CD4-positive, alpha-beta memory T cell (primary cell): ENCODE measurements at regions of chr4 and their contacts with region 1.

Region 1: DNA sequence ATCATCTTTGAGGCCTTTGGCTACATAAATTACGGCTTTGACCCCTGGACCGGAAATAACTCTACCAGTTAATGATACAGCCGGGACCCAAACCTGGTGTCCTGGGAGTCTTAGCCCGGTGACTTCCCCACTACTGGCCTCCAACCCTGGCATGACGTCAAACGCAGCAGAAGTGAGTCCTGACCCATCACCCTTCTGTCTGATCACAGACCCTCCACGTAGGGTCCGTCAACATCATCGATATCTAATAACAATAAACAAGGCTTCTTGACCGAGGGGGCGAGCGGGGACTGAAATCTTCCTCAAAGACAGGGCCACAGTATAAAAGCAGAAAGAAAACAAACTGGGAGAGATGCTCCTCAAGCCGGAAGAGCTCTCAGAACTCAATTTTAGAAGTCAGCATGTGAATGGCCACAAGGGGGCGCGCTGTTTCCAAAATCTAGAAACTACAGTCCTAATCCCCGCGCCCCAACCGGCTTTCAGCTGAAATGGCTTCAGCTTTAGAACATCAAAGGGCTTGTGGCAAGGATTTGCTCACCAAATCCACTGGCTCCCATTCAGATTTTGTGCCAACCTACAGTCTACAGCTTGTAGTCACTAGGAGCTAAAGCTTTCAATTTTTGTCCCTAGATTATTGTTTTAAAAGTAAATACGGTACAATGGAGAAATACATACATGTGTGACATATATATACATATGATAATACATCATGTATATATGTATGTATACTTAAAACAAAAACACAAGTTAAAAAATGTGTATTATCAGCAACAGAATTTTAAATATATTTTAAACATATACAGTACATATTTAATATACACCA is 46.4 kb upstream of the ENPP6 start:
- DNase-seq: peak; percentile 85 to 92 (median 88)
- H3K4me3 ChIP-seq: no peak overlapping the region
- H3K4me3 Mint-ChIP-seq: peak overlapping the region in 5 of 8 donors; percentile 0 to 55 (median 38)
- H3K27ac ChIP-seq: no peak overlapping the region
- H3K27ac Mint-ChIP-seq: peak overlapping the region; percentile 3 to 75 (median 31)
- H3K4me1 ChIP-seq: peaks cover 28% of the 10 kb centered on the region
- H3K4me1 Mint-ChIP-seq: peaks cover 24 to 41% (median 35%) of the 10 kb centered on the region in 4 donors
- H3K27me3 ChIP-seq: no peaks in the 10 kb centered on the region
- H3K27me3 Mint-ChIP-seq: peaks cover 0 to 2% of the 10 kb centered on the region in 2 donors

Region 2: DNA sequence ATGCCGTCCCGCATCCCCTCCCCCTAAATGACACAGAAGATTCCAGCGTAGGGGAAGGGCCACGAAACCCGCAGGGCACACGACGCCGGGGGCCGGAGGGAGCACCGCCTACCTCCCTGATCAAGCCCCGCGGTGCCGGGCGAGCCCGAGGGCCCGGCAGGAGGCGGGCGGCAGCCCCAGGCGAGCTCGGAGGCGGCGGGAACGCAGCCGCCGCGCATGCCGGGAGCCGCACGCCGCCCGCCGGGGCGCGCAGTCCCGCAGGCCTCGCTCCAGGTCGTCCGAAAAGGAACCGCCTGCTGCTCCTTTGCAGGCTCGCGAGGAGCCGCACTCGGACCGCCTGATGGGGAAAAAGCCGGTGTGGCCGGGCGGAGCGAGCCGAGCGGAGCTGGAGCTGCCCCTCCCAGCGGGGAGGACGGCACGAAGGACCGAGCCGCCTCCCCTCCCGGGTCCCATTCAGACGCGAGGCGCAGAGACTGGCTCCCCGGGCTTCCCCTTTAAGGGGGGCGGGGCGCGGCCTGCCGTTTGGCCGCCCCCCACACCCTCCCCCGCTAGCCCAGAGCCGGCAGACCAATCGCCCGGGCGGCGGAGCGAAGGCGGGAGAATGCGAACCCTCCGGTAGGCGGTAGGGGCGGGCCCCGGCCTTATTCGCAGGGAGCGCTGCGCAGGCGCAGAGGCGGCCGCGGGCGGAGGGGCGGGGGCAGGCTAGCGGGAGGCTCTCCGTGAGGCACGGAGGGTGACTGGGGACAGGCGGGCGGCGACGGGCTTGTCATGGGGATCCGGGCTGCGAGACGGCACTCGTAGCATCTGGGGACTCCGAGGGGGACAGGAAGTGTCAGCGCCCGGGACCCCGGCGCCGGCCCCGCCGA is 759.8 kb before region 1 on chr4:
- CTCF ChIA-PET with region 1: no interaction called
- POLR2A ChIA-PET with region 1: no interaction called
- intact Hi-C with region 1: loop called (anchors 5 kb)
- DNase-seq: peak; percentile 98 to 100 (median 99)
- H3K4me3 ChIP-seq: peak overlapping the region; percentile 50 to 73
- H3K4me3 Mint-ChIP-seq: peak overlapping the region; percentile 82 to 98 (median 94)
- H3K27ac ChIP-seq: peak overlapping the region; percentile 90
- H3K27ac Mint-ChIP-seq: peak overlapping the region; percentile 89 to 98 (median 95)
- H3K4me1 ChIP-seq: peaks cover 19% of the 10 kb centered on the region
- H3K4me1 Mint-ChIP-seq: peaks cover 9 to 27% (median 23%) of the 10 kb centered on the region in 4 donors
- H3K27me3 ChIP-seq: no peaks in the 10 kb centered on the region
- H3K27me3 Mint-ChIP-seq: no peaks in the 10 kb centered on the region

Region 3: DNA sequence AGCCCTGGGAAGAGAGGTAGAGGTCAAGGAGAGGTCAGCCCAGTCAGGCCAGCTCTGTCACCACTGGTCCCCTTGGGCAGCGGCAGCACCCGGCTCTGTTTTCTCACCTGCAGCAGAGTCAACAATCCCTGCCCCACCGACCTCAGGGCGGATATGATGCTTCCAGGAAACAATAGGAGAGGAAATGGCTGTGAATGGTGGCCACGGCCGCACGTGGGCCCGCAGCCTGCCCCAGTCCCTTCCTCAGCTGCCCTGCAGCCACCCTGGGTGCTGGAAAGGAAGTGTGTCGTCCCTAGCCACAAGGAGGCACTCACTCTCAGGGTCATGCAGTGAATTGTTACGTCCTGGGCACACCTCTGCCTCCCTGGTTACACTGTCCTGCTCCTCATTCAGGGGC is 46.0 kb after region 1 on chr4:
- CTCF ChIA-PET with region 1: interaction called, 8 read pairs
- POLR2A ChIA-PET with region 1: interaction called, 11 read pairs
- intact Hi-C with region 1: loop called (anchors 1 kb)
- DNase-seq: peak; percentile 46 to 61 (median 48)
- H3K4me3 ChIP-seq: no peak overlapping the region
- H3K4me3 Mint-ChIP-seq: peak overlapping the region in 7 of 8 donors; percentile 27 to 63 (median 53)
- H3K27ac ChIP-seq: no peak overlapping the region
- H3K27ac Mint-ChIP-seq: peak overlapping the region; percentile 17 to 94 (median 71)
- H3K4me1 ChIP-seq: peaks cover 15% of the 10 kb centered on the region
- H3K4me1 Mint-ChIP-seq: peaks cover 18 to 29% (median 24%) of the 10 kb centered on the region in 4 donors
- H3K27me3 ChIP-seq: no peaks in the 10 kb centered on the region
- H3K27me3 Mint-ChIP-seq: no peaks in the 10 kb centered on the region

Region 4: DNA sequence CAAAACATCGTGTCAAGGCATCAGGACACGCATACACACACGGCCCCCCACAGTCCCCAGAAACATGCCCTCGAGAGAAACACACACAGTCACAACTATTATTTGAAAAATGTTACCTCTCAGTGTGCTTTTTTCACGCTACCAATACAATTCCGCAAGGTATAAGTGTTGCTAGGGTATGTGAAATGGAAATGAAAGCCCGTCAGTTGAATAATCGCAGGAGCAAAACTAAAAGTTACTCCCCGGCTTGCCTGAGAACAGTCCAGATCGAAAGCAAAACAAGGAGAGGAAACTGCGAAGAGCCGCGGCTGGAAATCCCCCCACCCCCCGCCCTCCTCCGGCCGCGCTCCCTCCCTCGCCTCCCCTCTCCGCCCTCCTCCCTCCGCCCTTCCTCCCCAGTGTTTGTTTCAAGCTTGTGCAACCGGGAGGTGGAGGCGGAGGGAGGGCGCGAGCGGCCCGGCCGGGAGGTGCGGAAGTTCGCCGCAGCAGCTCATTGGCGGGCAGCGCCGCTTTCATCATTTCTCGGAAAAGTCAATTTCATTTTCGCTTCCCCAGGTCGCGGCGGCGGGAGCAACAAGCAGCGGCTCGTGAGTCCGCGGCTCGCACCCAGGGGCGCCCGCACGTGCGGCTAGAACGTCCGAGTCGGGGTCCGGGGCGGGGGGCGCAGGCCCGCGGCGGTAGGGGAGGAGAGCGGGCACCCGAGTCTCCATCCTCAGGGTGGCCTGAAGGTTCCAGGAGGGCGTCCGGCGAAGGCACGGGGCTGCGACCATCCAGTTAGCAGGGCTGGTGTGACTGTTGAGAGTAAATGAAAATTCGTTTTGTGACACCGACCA is 210.4 kb after region 1 on chr4 and contains the start of gene IRF2:
- CTCF ChIA-PET with region 1: interaction called, 13 read pairs
- POLR2A ChIA-PET with region 1: interaction called, 70 read pairs
- intact Hi-C with region 1: loop called (anchors 1 kb)
- DNase-seq: peak; percentile 92 to 99 (median 97)
- H3K4me3 ChIP-seq: peak within 1 kb of the TSS; percentile 96 to 100
- H3K4me3 Mint-ChIP-seq: peak within 1 kb of the TSS; percentile 95 to 100 (median 100)
- H3K27ac ChIP-seq: peak within 1 kb of the TSS; percentile 99
- H3K27ac Mint-ChIP-seq: peak within 1 kb of the TSS; percentile 96 to 100 (median 99)
- H3K4me1 ChIP-seq: peaks cover 66% of the 10 kb centered on the region
- H3K4me1 Mint-ChIP-seq: peaks cover 42 to 85% (median 57%) of the 10 kb centered on the region in 4 donors
- H3K27me3 ChIP-seq: no peaks in the 10 kb centered on the region
- H3K27me3 Mint-ChIP-seq: no peaks in the 10 kb centered on the region
- total RNA-seq, gene IRF2: 66.7 to 70.4 TPM

Region 5: GRCh38 chr4:184487513-184487912 is 223.4 kb after region 1 on chr4:
- CTCF ChIA-PET with region 1: no interaction called
- POLR2A ChIA-PET with region 1: no interaction called
- intact Hi-C with region 1: no loop called
- DNase-seq: no peak
- H3K4me3 ChIP-seq: no peak overlapping the region
- H3K4me3 Mint-ChIP-seq: no peak overlapping the region
- H3K27ac ChIP-seq: no peak overlapping the region
- H3K27ac Mint-ChIP-seq: peak overlapping the region in 1 of 7 donors; percentile 14
- H3K4me1 ChIP-seq: no peaks in the 10 kb centered on the region
- H3K4me1 Mint-ChIP-seq: peaks cover 0 to 14% (median 2%) of the 10 kb centered on the region in 4 donors
- H3K27me3 ChIP-seq: no peaks in the 10 kb centered on the region
- H3K27me3 Mint-ChIP-seq: no peaks in the 10 kb centered on the region

Region 6: DNA sequence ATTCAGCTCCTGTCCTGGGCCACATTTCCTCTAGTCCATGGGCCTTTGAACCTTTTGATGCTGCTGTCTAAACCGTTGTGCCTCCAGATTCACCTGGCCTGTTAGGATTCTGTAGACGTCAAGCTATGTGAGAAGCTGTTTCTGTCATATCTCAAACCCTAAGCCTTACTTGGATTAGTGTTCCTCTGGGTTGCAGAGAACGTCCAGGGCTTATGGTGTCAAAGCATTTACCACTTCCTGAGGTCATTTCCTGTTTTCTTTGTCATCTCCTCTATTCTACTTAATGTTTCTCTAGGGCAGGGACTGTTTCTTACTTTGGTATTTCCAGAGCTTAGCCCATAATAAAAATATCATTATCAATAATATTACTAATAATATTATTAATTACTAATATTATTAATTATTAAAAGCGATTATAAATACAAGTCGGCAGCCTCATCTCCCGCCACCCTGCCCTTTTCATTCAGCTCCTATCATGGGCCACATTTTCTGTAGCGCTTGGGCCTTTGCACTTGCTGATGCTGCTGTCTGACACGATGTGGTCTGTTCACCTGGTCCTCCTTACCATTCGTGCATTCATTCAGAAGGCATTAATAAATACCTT is 404.5 kb after region 1 on chr4:
- CTCF ChIA-PET with region 1: interaction called, 11 read pairs
- POLR2A ChIA-PET with region 1: no interaction called
- intact Hi-C with region 1: no loop called
- DNase-seq: peak in 4 of 5 donors; percentile 24 to 38 (median 32)
- H3K4me3 ChIP-seq: no peak overlapping the region
- H3K4me3 Mint-ChIP-seq: peak overlapping the region in 7 of 8 donors; percentile 25 to 77 (median 40)
- H3K27ac ChIP-seq: peak overlapping the region; percentile 5
- H3K27ac Mint-ChIP-seq: peak overlapping the region; percentile 54 to 94 (median 72)
- H3K4me1 ChIP-seq: peaks cover 24% of the 10 kb centered on the region
- H3K4me1 Mint-ChIP-seq: peaks cover 16 to 34% (median 30%) of the 10 kb centered on the region in 4 donors
- H3K27me3 ChIP-seq: no peaks in the 10 kb centered on the region
- H3K27me3 Mint-ChIP-seq: no peaks in the 10 kb centered on the region

Region 7: DNA sequence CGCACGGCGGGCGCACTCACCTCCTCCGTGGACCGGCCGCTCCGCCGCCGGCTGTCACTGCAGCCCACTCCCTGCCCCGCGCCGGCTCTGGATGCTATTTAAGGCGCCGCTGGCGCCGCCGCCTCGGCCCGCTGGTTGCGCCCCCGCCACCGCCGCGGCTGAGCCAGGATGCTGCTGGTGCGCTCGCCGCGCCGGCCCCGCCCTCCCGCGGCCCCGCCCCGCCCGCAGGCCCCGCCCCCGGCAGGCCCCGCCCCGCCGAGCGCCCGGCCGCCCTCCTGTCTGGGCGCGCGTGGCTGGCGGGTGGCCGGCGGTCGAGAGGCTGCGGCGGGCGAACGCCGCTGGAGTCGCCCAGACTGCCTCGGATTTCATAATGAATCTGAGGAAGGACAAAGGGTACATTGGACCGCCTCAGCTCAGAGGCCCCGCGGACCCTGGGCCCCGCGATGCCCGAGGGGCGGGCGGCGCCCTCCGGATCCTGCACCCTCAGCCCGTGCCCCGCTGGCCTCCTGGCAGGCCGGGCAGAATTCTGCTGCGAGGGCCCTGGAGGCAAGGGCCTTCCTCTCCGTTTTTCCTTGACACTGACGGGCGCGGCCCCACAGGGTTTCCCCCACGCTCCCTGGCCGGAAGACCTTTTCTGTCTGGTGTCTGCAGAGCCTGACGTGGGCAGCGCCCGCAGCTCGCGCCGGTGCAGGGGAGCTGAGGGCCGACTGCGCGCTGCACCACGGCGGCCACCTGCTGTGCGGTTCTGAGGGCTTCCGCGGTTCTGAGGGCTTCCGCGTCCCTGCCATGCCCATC is 562.0 kb after region 1 on chr4 and contains the start of gene ACSL1:
- CTCF ChIA-PET with region 1: no interaction called
- POLR2A ChIA-PET with region 1: interaction called, 3 read pairs
- intact Hi-C with region 1: loop called (anchors 5 kb)
- DNase-seq: peak; percentile 73 to 80 (median 79)
- H3K4me3 ChIP-seq: peak within 1 kb of the TSS; percentile 24 to 55
- H3K4me3 Mint-ChIP-seq: peak within 1 kb of the TSS; percentile 85 to 97 (median 91)
- H3K27ac ChIP-seq: peak within 1 kb of the TSS; percentile 56
- H3K27ac Mint-ChIP-seq: peak within 1 kb of the TSS; percentile 85 to 97 (median 93)
- H3K4me1 ChIP-seq: peaks cover 24% of the 10 kb centered on the region
- H3K4me1 Mint-ChIP-seq: peaks cover 13 to 45% (median 19%) of the 10 kb centered on the region in 4 donors
- H3K27me3 ChIP-seq: no peaks in the 10 kb centered on the region
- H3K27me3 Mint-ChIP-seq: no peaks in the 10 kb centered on the region
- total RNA-seq, gene ACSL1: 11.5 to 12.9 TPM

Region 8: DNA sequence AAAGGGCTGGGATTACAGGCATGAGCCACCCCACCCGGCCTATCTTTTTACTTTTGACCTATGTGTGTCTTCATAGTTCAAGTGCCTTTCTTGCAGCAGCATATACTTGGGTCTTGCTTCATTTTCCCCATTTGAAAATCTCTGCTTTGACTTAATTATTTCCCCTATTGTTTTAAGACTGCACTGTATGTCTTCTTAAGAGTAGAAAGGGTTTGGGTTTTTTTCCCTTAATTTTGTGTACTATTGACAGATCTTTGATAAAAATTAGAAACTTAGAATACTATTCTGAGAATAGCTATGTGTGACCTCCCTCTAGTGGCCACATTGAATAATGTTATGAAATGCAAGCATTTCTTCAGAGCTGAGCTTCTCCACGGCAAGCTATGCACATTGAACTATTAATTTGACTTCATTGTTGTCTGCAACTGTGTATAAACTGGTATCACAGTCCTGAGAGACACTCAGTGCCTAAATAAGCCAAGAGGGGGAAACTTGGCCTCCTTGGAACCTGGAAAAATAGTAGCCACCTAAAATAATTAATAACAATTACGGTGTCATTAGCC is 870.3 kb after region 1 on chr4:
- CTCF ChIA-PET with region 1: interaction called, 4 read pairs
- POLR2A ChIA-PET with region 1: no interaction called
- intact Hi-C with region 1: loop called (anchors 1 kb)
- DNase-seq: peak in 4 of 5 donors; percentile 36 to 45 (median 44)
- H3K4me3 ChIP-seq: no peak overlapping the region
- H3K4me3 Mint-ChIP-seq: no peak overlapping the region
- H3K27ac ChIP-seq: no peak overlapping the region
- H3K27ac Mint-ChIP-seq: peak overlapping the region in 1 of 7 donors; percentile 84
- H3K4me1 ChIP-seq: no peaks in the 10 kb centered on the region
- H3K4me1 Mint-ChIP-seq: peaks cover 0 to 4% (median 0%) of the 10 kb centered on the region in 4 donors
- H3K27me3 ChIP-seq: no peaks in the 10 kb centered on the region
- H3K27me3 Mint-ChIP-seq: peaks cover 13 to 19% of the 10 kb centered on the region in 2 donors